ENCODE measurements at regions of chrX and their contacts with region 1.

Region 1: GRCh38 chrX:22063284-22063683 is 31.2 kb downstream of the PHEX start:
- DNase-seq: no peak
- H3K4me3 Mint-ChIP-seq: no peak overlapping the region
- H3K27ac Mint-ChIP-seq: peak overlapping the region; percentile 20
- H3K4me1 Mint-ChIP-seq: peaks cover 46% of the 10 kb centered on the region
- H3K27me3 Mint-ChIP-seq: no peaks in the 10 kb centered on the region

Region 2: GRCh38 chrX:21982311-21982710 is 81.0 kb before region 1 on chrX:
- intact Hi-C with region 1: no loop called
- DNase-seq: no peak
- H3K4me3 Mint-ChIP-seq: no peak overlapping the region
- H3K27ac Mint-ChIP-seq: no peak overlapping the region
- H3K4me1 Mint-ChIP-seq: peaks cover 4% of the 10 kb centered on the region
- H3K27me3 Mint-ChIP-seq: no peaks in the 10 kb centered on the region

Region 3: DNA sequence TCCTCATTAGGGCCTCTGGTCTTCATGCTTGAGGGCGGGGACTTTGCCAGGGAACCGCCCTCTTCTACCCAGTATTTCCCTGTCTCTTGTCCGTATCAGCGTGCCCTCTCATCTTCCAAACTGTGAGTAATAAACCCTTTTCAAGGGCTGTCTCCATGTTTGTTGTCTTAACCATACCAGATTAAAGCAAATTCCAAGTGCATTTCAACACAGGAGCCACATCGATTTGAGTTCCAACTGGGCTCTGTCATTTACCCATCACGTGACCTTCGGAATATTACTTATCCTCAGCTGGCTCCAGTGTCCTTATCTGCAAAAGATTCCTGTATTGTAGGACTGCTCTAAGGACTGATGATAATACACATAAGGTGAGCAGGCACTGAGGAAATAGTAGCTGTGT is 37.5 kb before region 1 on chrX:
- intact Hi-C with region 1: loop called (anchors 5 kb)
- DNase-seq: no peak
- H3K4me3 Mint-ChIP-seq: no peak overlapping the region
- H3K27ac Mint-ChIP-seq: no peak overlapping the region
- H3K4me1 Mint-ChIP-seq: peaks cover 9% of the 10 kb centered on the region
- H3K27me3 Mint-ChIP-seq: no peaks in the 10 kb centered on the region

Region 4: DNA sequence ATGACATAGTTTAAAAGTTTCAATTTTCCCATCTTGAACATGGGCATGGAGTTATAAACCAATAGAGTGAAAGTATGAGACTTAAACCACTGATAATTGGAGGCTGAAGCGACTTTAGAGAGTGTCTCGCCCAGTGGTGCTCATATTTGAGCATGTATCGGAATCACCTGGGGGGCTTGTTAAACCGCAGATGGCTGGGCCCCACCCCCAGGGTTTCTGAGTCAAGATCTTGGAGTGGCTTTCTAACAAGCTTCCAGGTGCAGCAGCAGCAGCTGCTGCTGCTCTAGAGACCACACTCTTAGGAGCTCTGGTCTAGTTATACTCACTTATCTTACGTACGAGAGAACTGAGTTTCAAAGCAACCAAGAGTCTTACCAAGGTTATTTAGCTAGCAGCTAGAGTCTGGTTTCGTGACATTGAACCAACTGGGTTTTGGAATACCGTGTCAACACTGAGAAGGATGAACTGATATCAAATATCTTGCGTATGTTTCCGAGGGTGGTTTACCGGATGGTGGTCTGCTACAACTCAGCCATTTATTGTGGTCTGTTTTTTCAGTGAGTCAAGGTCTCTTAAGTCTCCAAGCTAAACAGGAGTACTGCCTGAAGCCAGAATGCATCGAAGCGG is 25.3 kb before region 1 on chrX:
- intact Hi-C with region 1: loop called (anchors 1 kb)
- DNase-seq: no peak
- H3K4me3 Mint-ChIP-seq: peak overlapping the region; percentile 54
- H3K27ac Mint-ChIP-seq: peak overlapping the region; percentile 69
- H3K4me1 Mint-ChIP-seq: peaks cover 11% of the 10 kb centered on the region
- H3K27me3 Mint-ChIP-seq: no peaks in the 10 kb centered on the region

Measured in activated T-helper 2 cell treated with anti-CD3 and anti-CD28 coated beads, Interferon-gamma antibody, Interleukin-2, Interleukin-4, amounts not matched to agents 10 μg/mL and 5 μg/mL and 100 μg/mL, durations not matched to agents 14 hours and 24 hours and 36 hours (primary cell).